Motor neuron (in vitro differentiated cells): ENCODE measurements at regions of chr2 and their contacts with region 1.

Region 1: DNA sequence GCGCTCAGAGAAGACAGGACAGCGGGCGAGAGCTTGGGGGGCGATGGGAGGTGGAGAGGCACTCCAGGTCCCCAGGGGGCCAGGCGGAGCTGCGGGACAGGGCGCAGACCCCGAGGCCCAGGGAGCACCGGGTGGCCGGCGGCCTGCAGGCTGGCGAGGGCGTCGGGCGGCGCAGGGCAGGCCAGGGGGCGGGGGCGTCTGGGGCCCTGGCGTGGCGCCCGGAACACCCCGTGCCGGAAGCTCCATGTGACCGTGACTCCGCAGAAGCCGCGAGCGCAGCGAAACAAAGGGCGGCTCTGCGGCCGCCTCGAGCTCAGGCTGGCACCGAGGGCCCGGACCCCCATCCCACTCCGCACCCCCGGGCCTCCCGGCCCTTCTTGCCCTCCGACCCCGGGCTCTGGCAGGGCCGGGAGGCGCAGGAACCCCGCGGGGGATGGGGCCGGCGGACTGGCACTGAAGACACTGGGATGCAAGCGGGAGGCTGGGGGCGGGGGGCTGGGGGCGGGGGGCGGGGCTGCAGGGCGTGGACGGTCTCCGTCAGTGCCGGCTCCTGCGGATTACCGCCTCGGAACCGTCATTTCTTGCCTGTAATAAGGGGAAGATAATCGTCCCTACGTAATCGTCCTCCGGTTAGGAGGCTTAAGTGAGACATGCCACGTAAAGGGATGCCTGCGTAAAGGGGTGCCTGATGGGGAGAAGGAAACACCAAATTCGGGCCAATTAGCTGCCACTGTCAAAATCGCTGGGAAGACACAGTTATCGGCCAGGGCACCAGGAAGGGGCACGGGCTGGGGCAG is 19.2 kb downstream of the SH2D6 start:
- ATAC-seq: peak; percentile 36 to 84 (median 76)
- H3K4me3 ChIP-seq: peak overlapping the region in 4 of 5 donors; percentile 6 to 19 (median 14)
- H3K27ac ChIP-seq: peak overlapping the region; percentile 77 to 81
- H3K4me1 ChIP-seq: peaks cover 41 to 42% of the 10 kb centered on the region in 2 donors

Region 2: DNA sequence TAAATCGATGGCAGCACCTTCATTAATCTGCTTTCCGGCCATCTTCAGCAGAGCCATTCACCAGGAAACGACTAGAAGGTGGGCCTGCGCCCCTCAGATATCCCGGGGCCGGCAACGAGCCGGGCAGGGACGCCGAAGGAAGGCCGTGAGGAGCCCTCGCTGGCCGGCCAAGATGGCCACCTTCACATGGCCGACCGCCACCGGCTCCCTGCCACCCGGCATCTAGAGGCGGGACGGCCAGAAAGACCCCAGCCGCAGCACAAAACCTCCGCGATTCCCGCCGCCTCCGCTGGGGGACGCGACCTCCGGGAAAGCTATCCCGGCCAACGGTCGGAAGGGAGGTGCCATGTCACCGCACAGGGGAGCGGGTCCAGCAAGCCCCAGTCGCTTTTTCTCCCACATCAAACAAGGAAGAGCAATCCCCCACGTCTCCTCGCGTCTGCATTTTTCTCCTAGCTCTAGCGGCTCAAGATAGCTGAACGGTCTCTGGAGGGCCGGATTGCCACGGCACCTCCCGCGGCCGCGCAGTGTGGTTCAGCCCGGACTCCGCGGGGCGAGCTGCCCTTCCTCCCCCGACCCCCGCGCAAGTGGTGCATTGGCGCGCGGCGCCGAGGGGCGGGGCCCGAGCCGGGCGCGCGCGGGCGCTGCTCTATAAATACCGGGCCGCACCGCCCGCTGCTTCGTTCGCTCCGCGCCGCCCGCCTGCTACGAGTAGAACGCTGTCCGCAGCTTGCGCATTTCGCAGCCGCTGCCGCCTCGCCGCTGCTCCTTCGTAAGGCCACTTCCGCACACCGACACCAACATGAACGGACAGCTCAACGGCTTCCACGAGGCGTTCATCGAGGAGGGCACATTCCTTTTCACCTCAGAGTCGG is 101.0 kb after region 1 on chr2 and contains the start of gene MAT2A:
- in situ Hi-C with region 1: loop called in 2 of 9 experiments (anchors 25 kb)
- ATAC-seq: peak; percentile 59 to 81 (median 78)
- H3K4me3 ChIP-seq: peak within 1 kb of the TSS; percentile 69 to 97 (median 86)
- H3K27ac ChIP-seq: peak within 1 kb of the TSS; percentile 100
- H3K4me1 ChIP-seq: peaks cover 20 to 26% of the 10 kb centered on the region in 2 donors
- total RNA-seq, gene MAT2A: 64.8 to 340 (median 147) TPM